ENCODE measurements at regions of chr17 and their contacts with region 1.

Region 1: GRCh38 chr17:44775136-44775837 is 16.5 kb downstream of the ADAM11 start:
- DNase-seq: peak; percentile 98
- H3K4me3 ChIP-seq: peak overlapping the region; percentile 41 to 84 (median 60)
- H3K27ac ChIP-seq: no peak overlapping the region
- H3K4me1 ChIP-seq: peaks cover 24% of the 10 kb centered on the region
- H3K27me3 ChIP-seq: no peaks in the 10 kb centered on the region
- CTCF ChIP-seq: no peak

Region 2: GRCh38 chr17:44533533-44534246 is 241.6 kb before region 1 on chr17:
- CTCF ChIA-PET with region 1: no interaction called
- dilution Hi-C with region 1: no loop called
- in situ Hi-C with region 1: no loop called
- intact Hi-C with region 1: loop called (anchors 5 kb)
- DNase-seq: peak; percentile 52
- H3K4me3 ChIP-seq: no peak overlapping the region
- H3K27ac ChIP-seq: no peak overlapping the region
- H3K4me1 ChIP-seq: no peaks in the 10 kb centered on the region
- H3K27me3 ChIP-seq: no peaks in the 10 kb centered on the region
- CTCF ChIP-seq: peak; percentile 91 to 97

Region 3: DNA sequence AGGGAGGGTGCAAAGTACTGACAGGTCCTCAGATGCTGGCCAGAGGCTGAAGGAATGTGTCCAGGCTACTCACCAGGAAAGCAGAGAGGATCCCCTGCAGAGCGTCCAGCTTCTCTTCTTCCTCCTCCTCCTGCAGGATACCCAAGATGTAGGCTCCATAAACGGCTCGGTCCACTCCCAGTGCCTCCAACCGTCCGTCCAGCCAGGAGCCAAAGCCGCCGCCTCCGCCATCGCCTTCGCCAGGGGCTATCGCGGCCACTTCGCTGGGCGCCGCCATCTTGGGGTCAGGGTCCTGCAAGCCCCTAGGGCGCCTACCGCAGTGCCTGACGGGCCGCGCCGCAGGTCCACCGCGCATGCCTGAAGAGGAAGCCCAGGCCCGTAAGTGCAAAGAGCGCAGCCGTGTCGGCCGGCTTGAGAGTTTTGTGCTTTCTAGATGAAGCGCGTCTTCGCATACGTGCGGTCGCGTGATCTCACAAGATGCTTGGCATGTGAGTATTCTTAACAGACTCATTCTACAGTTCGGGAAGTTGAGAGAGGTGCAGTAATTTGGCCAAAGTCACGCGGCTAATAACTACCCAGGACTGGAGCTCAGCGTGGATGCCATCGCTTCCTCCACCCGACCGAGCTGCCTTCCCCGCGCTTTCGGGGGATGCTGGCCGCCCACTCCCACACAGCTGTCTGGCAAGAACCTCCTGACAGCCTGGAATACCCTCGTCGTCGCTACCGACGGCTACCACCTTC is 85.6 kb before region 1 on chr17 and contains the start of gene CCDC43:
- CTCF ChIA-PET with region 1: no interaction called
- dilution Hi-C with region 1: no loop called
- in situ Hi-C with region 1: no loop called
- intact Hi-C with region 1: no loop called
- DNase-seq: peak; percentile 90
- H3K4me3 ChIP-seq: peak within 1 kb of the TSS; percentile 63 to 84 (median 84)
- H3K27ac ChIP-seq: peak within 1 kb of the TSS; percentile 69
- H3K4me1 ChIP-seq: peaks cover 4% of the 10 kb centered on the region
- H3K27me3 ChIP-seq: no peaks in the 10 kb centered on the region
- CTCF ChIP-seq: no peak
- total RNA-seq, gene CCDC43: 34.8 to 36.4 TPM

Region 4: DNA sequence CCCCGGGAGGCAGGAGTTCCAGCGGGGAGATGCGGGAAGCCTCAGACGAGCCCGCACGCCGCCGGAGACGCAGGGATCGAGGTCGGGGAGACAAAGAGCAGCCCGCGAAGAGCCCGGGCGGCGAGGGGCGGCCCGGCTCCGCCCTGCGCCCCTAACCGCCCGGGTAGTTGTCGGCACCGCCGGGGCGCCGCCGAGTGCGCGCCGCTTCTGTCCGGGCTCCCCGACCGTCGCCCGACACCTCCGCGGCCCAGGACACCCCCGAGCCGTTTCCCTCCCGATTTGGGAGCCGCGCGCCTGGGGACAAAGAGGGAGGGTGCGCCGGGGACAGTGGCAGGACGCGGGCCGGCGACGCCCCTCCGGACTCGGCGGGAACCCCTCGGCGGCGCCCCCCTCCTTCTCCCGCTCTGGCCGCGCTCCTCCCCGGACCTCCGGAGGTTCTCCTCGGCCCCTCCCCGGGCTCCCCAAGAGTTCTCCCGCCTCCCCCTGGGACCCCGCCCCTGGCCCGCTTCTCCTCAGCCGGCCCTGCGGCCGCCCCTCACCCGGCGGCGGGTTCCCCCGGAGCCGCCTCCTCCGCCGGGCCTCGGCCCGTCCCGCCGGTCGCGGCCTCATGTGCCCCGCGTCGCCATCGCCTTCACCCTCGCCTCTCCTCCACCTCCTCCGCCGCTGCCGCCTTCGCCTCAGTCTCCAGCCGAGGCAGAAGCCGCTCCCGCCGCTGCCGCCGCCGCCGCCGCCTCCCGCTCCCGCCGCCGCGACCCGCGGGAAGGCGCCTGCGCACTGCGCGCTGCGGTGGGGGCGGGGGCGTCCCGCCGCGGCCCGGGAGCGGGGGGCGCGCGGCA is 54.5 kb after region 1 on chr17 and contains the start of gene GJC1:
- CTCF ChIA-PET with region 1: interaction called, 3 read pairs
- dilution Hi-C with region 1: no loop called
- in situ Hi-C with region 1: no loop called
- intact Hi-C with region 1: loop called (anchors 1 kb)
- DNase-seq: peak; percentile 45
- H3K4me3 ChIP-seq: peak within 1 kb of the TSS; percentile 80 to 98 (median 90)
- H3K27ac ChIP-seq: peak within 1 kb of the TSS; percentile 72
- H3K4me1 ChIP-seq: peaks cover 9% of the 10 kb centered on the region
- H3K27me3 ChIP-seq: no peaks in the 10 kb centered on the region
- CTCF ChIP-seq: no peak
- total RNA-seq, gene GJC1: 7.0 to 26.8 TPM

Region 5: DNA sequence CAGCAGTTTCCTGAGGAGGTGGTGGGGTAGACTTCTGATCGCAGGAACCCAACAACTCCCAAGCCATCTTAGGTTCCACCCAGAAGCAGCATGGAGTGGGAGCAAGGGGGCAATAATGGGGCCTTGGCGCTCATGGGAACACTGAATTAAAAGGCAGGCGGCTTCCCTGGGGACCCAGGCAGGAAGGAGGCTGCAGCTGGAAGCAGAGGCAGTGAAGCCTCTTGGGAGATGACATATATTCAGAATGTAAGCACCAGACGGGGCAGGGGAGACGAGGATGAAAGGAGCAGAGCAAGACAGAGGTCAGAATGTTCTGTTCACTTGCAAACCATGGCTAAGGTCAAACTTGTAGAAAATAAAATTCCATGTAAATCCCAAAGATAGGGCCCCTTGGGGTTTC is 75.3 kb after region 1 on chr17:
- CTCF ChIA-PET with region 1: no interaction called
- dilution Hi-C with region 1: loop called (anchors 5 kb)
- in situ Hi-C with region 1: no loop called
- intact Hi-C with region 1: no loop called
- DNase-seq: no peak
- H3K4me3 ChIP-seq: no peak overlapping the region
- H3K27ac ChIP-seq: no peak overlapping the region
- H3K4me1 ChIP-seq: no peaks in the 10 kb centered on the region
- H3K27me3 ChIP-seq: no peaks in the 10 kb centered on the region
- CTCF ChIP-seq: no peak

Region 6: GRCh38 chr17:44878627-44879221 is 103.4 kb after region 1 on chr17:
- CTCF ChIA-PET with region 1: interaction called, 4 read pairs
- dilution Hi-C with region 1: loop called (anchors 10 kb)
- in situ Hi-C with region 1: no loop called
- intact Hi-C with region 1: loop called (anchors 1 kb)
- DNase-seq: no peak
- H3K4me3 ChIP-seq: no peak overlapping the region
- H3K27ac ChIP-seq: no peak overlapping the region
- H3K4me1 ChIP-seq: no peaks in the 10 kb centered on the region
- H3K27me3 ChIP-seq: no peaks in the 10 kb centered on the region
- CTCF ChIP-seq: peak; percentile 46 to 64

Region 7: GRCh38 chr17:44906010-44906646 is 130.8 kb after region 1 on chr17:
- CTCF ChIA-PET with region 1: no interaction called
- dilution Hi-C with region 1: no loop called
- in situ Hi-C with region 1: no loop called
- intact Hi-C with region 1: no loop called
- DNase-seq: peak; percentile 69
- H3K4me3 ChIP-seq: no peak overlapping the region
- H3K27ac ChIP-seq: no peak overlapping the region
- H3K4me1 ChIP-seq: peaks cover 46% of the 10 kb centered on the region
- H3K27me3 ChIP-seq: no peaks in the 10 kb centered on the region
- CTCF ChIP-seq: no peak

Region 8: GRCh38 chr17:45087504-45087975 is 312.3 kb after region 1 on chr17:
- CTCF ChIA-PET with region 1: no interaction called
- dilution Hi-C with region 1: loop called (anchors 10 kb)
- in situ Hi-C with region 1: no loop called
- intact Hi-C with region 1: no loop called
- DNase-seq: no peak
- H3K4me3 ChIP-seq: no peak overlapping the region
- H3K27ac ChIP-seq: no peak overlapping the region
- H3K4me1 ChIP-seq: peaks cover under 1% of the 10 kb centered on the region
- H3K27me3 ChIP-seq: no peaks in the 10 kb centered on the region
- CTCF ChIP-seq: no peak

Measured in mammary epithelial cell (primary cell).